GM12878 (cell line): ENCODE measurements at regions of chr10 and their contacts with region 1.

Region 1: DNA sequence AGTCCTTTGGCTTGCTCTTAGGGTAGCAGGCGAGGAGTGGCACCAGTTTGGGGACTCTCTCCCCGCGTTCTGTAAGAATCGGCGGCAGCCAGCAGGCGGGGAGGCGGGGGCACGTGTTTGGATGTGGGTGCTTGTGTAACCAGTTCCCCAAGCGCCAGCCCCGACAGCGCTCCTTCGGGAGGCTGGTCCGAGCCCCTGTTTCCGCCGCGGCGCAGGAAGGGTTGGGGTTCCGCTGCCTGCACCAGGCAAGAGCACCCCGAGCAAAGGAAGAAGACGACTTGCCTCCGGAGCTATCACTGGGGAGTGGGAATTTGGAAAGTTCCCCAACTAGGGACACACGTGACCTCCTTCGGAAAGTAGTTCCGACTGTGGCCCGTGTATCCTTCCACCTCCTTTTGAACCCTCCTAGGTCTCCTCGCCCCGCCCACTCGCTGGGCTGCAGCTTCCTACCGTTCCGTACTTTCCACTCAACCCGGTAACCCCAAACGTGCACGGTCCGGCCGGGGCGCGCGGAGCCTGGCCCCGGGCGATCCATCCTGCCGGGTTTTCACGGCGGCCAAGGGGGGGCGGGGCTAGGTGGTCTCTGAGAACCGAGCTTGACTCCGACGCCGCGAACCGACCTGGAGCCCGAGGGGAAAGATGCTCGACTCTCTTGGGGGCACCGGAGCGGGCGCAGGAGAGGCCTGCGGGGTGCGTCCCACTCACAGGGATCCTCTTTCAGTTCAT is 1.2 kb downstream of the KLLN start:
- DNase-seq: peak; percentile 95
- ATAC-seq: peak; percentile 55
- H3K4me3 ChIP-seq: peak overlapping the region; percentile 84
- H3K27ac ChIP-seq: peak overlapping the region; percentile 98
- H3K4me1 ChIP-seq: peaks cover 8% of the 10 kb centered on the region
- H3K27me3 ChIP-seq: no peaks in the 10 kb centered on the region
- CTCF ChIP-seq: no peak
- EP300 ChIP-seq: peak in 1 of 2 experiments; percentile 72; a peak in 2 of 4 replicates
- POLR2A ChIP-seq: peak; percentile 87
- RAD21 ChIP-seq: peak; percentile 37

Region 2: DNA sequence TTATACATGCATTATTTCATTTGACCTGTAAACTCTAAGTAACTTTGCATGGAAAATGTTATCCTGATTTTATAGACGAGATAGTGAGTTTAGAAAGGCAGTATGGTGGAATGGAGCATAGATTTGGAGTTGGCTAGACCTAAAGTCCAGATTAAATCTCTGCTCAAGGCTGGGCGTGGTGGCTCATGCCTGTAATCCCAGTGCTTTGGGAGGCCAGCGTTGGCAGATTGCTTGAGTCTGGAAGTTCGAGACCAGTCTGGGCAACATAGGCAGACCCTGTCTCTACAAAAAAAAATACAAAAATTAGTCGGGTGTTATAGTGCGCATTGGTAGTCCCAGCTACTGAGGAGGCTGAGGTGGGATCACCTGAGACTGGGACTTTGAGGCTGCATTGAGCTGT is 10.7 kb after region 1 on chr10:
- CTCF ChIA-PET with region 1: interaction called, 10 read pairs
- POLR2A ChIA-PET with region 1: interaction called, 12 read pairs
- RAD21 ChIA-PET with region 1: interaction called, 18 read pairs
- SMC1A ChIA-PET with region 1: interaction called, 12 read pairs
- in situ Hi-C with region 1: no loop called
- intact Hi-C with region 1: no loop called
- DNase-seq: no peak
- ATAC-seq: peak; percentile 8
- H3K4me3 ChIP-seq: peak overlapping the region; percentile 61
- H3K27ac ChIP-seq: no peak overlapping the region
- H3K4me1 ChIP-seq: no peaks in the 10 kb centered on the region
- H3K27me3 ChIP-seq: no peaks in the 10 kb centered on the region
- CTCF ChIP-seq: no peak
- EP300 ChIP-seq: no peak
- POLR2A ChIP-seq: no peak
- RAD21 ChIP-seq: no peak

Region 3: GRCh38 chr10:88080213-88080612 is 218.1 kb after region 1 on chr10:
- CTCF ChIA-PET with region 1: interaction called, 5 read pairs
- POLR2A ChIA-PET with region 1: interaction called, 4 read pairs
- RAD21 ChIA-PET with region 1: interaction called, 37 read pairs
- SMC1A ChIA-PET with region 1: interaction called, 16 read pairs
- in situ Hi-C with region 1: no loop called
- intact Hi-C with region 1: no loop called
- DNase-seq: no peak
- ATAC-seq: peak; percentile 75
- H3K4me3 ChIP-seq: peak overlapping the region; percentile 30
- H3K27ac ChIP-seq: peak overlapping the region; percentile 60
- H3K4me1 ChIP-seq: peaks cover 52% of the 10 kb centered on the region
- H3K27me3 ChIP-seq: no peaks in the 10 kb centered on the region
- CTCF ChIP-seq: no peak
- EP300 ChIP-seq: peak; percentile 75 to 82; a peak in 3 of 4 replicates
- POLR2A ChIP-seq: no peak
- RAD21 ChIP-seq: 0 out of 2 replicates have a peak, but pooled peaks have one; percentile 15

Region 4: DNA sequence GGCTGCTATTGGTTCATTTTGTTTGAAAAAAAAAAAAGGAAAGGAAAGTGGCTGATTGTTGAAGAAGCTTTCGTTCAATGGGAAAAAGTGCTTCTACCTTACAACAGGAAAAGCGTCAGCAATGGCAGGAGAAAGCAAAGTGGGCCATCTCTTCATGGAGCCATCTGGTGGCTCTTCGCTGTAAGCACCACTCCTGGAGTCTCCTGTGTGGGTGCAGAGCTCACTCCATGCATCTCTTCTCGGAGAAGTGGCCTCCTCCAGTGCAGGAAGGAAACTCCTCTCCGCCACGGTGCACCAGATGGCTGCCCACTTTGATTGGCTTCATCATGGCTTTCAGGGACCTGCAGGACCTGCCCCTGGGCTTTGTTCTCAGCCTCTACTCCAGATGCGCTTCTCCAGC is 252.3 kb after region 1 on chr10:
- CTCF ChIA-PET with region 1: interaction called, 45 read pairs
- POLR2A ChIA-PET with region 1: interaction called, 6 read pairs
- RAD21 ChIA-PET with region 1: interaction called, 51 read pairs
- SMC1A ChIA-PET with region 1: interaction called, 32 read pairs
- in situ Hi-C with region 1: loop called (anchors 5 kb)
- intact Hi-C with region 1: no loop called
- DNase-seq: no peak
- ATAC-seq: peak; percentile 61
- H3K4me3 ChIP-seq: no peak overlapping the region
- H3K27ac ChIP-seq: peak overlapping the region; percentile 86
- H3K4me1 ChIP-seq: peaks cover 87% of the 10 kb centered on the region
- H3K27me3 ChIP-seq: no peaks in the 10 kb centered on the region
- CTCF ChIP-seq: peak; percentile 69 to 73 (median 72)
- EP300 ChIP-seq: no peak
- POLR2A ChIP-seq: no peak
- RAD21 ChIP-seq: peak; percentile 86

Region 5: GRCh38 chr10:88288320-88289059 is 426.4 kb after region 1 on chr10:
- CTCF ChIA-PET with region 1: interaction called, 3 read pairs
- POLR2A ChIA-PET with region 1: no interaction called
- RAD21 ChIA-PET with region 1: interaction called, 3 read pairs
- SMC1A ChIA-PET with region 1: no interaction called
- in situ Hi-C with region 1: no loop called
- intact Hi-C with region 1: loop called (anchors 5 kb)
- DNase-seq: peak; percentile 67
- ATAC-seq: peak; percentile 91
- H3K4me3 ChIP-seq: no peak overlapping the region
- H3K27ac ChIP-seq: peak overlapping the region; percentile 13; the same call in 1 of the 2 replicates
- H3K4me1 ChIP-seq: peaks cover 15% of the 10 kb centered on the region
- H3K27me3 ChIP-seq: no peaks in the 10 kb centered on the region
- CTCF ChIP-seq: no peak
- EP300 ChIP-seq: peak; percentile 57 to 66; a peak in 2 of 4 replicates
- POLR2A ChIP-seq: no peak
- RAD21 ChIP-seq: 0 out of 2 replicates have a peak, but pooled peaks have one; percentile 25